ENCODE measurements at regions of chr6 and their contacts with region 1.

Region 1: GRCh38 chr6:5995949-5996713 is 10.6 kb downstream of the NRN1 start:
- DNase-seq: no peak
- H3K4me3 Mint-ChIP-seq: peak overlapping the region; percentile 81
- H3K27ac Mint-ChIP-seq: no peak overlapping the region
- H3K4me1 Mint-ChIP-seq: peaks cover 39% of the 10 kb centered on the region
- H3K27me3 Mint-ChIP-seq: peaks cover 87% of the 10 kb centered on the region

Region 2: DNA sequence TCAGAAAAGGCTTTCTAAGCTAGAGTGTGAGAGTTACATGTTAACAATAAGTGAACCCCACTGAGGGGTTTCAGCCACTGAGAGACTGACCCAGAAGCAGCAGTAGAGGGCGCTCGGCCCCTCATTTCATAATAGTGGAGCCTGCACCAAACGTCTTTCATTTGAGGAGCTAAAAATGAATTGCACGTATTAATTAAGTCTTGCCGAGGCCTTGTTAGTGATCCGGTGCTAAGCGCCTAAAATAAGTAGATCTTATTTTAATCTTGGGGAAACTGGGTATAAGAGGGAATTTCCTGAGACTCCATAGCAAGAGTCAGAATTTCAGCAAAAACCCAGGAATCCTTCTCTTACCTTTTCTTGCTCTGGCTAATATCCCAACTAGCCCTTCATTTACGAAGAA is 525.1 kb before region 1 on chr6:
- intact Hi-C with region 1: loop called (anchors 5 kb)
- DNase-seq: peak; percentile 45
- H3K4me3 Mint-ChIP-seq: no peak overlapping the region
- H3K27ac Mint-ChIP-seq: no peak overlapping the region
- H3K4me1 Mint-ChIP-seq: peaks cover 10% of the 10 kb centered on the region
- H3K27me3 Mint-ChIP-seq: no peaks in the 10 kb centered on the region

Region 3: GRCh38 chr6:5981126-5982026 is 14.8 kb before region 1 on chr6:
- intact Hi-C with region 1: no loop called
- DNase-seq: no peak
- H3K4me3 Mint-ChIP-seq: no peak overlapping the region
- H3K27ac Mint-ChIP-seq: no peak overlapping the region
- H3K4me1 Mint-ChIP-seq: peaks cover 21% of the 10 kb centered on the region
- H3K27me3 Mint-ChIP-seq: peaks cover 26% of the 10 kb centered on the region

Region 4: DNA sequence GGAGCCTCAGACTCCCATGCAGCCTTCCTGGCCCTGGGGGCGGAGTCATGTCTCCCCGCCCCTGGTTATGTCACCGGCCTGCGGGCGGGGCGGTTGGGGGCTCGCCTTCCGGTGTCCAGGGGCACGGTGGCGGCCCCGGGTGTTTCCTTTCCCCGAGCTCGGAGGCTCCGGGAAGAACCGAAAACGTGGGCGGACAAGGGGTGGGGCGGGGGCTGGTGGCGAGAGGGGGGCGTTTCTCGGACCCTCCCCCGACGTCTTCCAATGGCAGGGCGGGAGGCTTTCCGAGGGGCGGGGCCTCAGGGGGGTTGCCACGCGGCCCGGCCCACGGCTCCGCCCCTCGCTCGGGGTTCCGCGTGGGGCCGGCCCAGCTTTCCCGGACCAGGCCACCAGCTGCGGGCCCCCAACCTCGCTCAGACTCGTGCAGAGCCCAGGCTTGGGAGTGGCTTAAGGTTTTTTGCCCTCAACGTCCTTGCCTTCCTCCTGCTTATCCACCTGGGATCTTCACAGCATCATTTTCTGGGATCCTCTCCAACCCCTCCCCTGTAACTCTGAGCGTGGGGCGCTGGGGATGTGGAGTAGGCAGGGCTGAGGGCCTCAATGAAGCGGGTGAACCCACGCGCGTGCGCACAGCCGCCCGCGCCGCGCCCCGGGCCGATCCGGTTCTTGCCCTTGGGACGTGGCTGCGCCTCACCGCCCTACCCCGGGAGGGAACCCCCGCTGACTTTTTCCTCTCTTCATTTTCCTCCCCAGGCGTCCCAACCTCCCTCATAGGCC is 12.7 kb after region 1 on chr6:
- intact Hi-C with region 1: loop called (anchors 1 kb)
- DNase-seq: peak; percentile 40
- H3K4me3 Mint-ChIP-seq: peak overlapping the region; percentile 81
- H3K27ac Mint-ChIP-seq: no peak overlapping the region
- H3K4me1 Mint-ChIP-seq: peaks cover 32% of the 10 kb centered on the region
- H3K27me3 Mint-ChIP-seq: peaks cover 72% of the 10 kb centered on the region

Region 5: DNA sequence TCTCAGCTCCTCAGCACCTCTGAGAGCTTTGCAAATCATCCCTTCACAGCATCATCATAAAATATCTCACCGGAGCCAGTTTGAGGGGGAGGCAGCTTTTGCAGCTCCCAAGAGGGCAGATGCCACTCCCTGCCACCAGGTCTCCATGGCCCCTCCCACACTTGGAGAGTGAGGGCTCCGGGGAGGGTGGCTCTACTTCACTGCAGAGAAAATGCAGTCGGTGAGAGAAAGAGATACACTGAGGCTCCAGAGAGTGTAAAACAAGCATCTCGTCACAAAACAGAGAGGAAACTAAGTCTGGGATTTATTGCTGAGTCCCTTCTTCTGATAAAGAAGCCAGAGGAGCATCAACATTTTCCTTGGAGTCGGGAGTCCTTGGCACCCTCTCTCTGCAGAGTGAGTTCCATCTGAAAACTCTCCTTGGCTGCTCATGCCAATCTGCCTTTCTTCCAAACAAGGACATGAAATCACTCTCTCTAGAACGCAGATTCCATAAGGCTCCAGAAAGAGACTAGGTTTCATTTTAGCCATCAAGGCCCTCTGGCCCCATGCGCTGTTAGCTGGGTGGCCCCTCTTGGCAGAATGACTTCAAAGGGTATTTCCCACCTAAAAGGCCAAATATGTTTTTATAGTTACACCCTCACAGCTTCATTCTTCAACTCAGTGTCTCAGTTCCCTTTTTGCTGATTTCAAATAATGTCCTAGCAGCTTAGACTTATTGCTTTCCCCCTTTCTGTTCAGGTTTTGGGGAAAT is 394.9 kb after region 1 on chr6:
- intact Hi-C with region 1: no loop called
- DNase-seq: no peak
- H3K4me3 Mint-ChIP-seq: no peak overlapping the region
- H3K27ac Mint-ChIP-seq: no peak overlapping the region
- H3K4me1 Mint-ChIP-seq: no peaks in the 10 kb centered on the region
- H3K27me3 Mint-ChIP-seq: peaks cover 1% of the 10 kb centered on the region

Measured in activated T-helper 2 cell treated with anti-CD3 and anti-CD28 coated beads, Interferon-gamma antibody, Interleukin-2, Interleukin-4, amounts not matched to agents 10 μg/mL and 5 μg/mL and 100 μg/mL, durations not matched to agents 14 hours and 24 hours and 36 hours (primary cell).